Esophagus squamous epithelium (tissue), 5 donors: ENCODE measurements at regions of chr11 and their contacts with region 1.

Region 1: DNA sequence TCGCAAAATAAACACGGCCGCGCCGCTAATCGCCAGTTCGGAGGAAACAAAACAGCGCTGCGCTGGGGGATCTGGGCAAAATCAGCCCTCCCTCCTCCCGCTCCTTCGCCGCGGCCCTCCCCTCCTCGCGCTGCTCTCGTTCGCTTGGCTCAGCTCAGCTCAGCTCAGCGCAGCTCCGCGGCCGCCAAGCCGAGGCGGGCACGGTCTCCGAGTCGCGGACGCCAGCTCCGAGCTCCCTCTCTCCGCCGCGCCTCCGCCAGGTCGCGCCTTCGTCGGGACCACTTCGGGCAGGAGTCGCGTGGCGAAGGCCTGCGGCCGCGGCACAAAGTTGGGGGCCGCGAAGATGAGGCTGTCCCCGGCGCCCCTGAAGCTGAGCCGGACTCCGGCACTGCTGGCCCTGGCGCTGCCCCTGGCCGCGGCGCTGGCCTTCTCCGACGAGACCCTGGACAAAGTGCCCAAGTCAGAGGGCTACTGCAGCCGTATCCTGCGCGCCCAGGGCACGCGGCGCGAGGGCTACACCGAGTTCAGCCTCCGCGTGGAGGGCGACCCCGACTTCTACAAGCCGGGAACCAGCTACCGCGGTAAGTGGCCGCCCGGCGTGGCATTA is at the start of gene SPON1:
- DNase-seq: no peak
- H3K4me3 ChIP-seq: peak within 1 kb of the TSS; percentile 17 to 67 (median 39)
- H3K27ac ChIP-seq: peak within 1 kb of the TSS; percentile 37 to 83 (median 68)
- H3K4me1 ChIP-seq: peaks cover 18 to 31% (median 24%) of the 10 kb centered on the region in 3 donors
- H3K27me3 ChIP-seq: peaks cover 7 to 78% (median 18%) of the 10 kb centered on the region in 4 donors
- CTCF ChIP-seq: no peak
- POLR2A ChIP-seq: peak in 1 of 4 donors; percentile 27
- total RNA-seq, gene SPON1: 1.6 to 44.4 (median 6.5) TPM

Region 2: GRCh38 chr11:14148653-14149273 is 186.1 kb after region 1 on chr11:
- intact Hi-C with region 1: loop called (anchors 5 kb)
- DNase-seq: no peak
- H3K4me3 ChIP-seq: no peak overlapping the region
- H3K27ac ChIP-seq: no peak overlapping the region
- H3K4me1 ChIP-seq: no peaks in the 10 kb centered on the region
- H3K27me3 ChIP-seq: no peaks in the 10 kb centered on the region
- CTCF ChIP-seq: peak in 5 of 6 experiments; percentile 46 to 70 (median 59)
- POLR2A ChIP-seq: no peak